Transverse colon (tissue), 4 donors: ENCODE measurements at regions of chr9 and their contacts with region 1.

Region 1: GRCh38 chr9:102700936-102701335 is 294.2 kb upstream of the CYLC2 start:
- DNase-seq: no peak
- H3K4me3 ChIP-seq: no peak overlapping the region
- H3K27ac ChIP-seq: no peak overlapping the region
- H3K4me1 ChIP-seq: no peaks in the 10 kb centered on the region
- H3K27me3 ChIP-seq: no peaks in the 10 kb centered on the region
- CTCF ChIP-seq: no peak
- EP300 ChIP-seq: no peak
- POLR2A ChIP-seq: no peak

Region 2: GRCh38 chr9:102779356-102779755 is 78.4 kb after region 1 on chr9:
- in situ Hi-C with region 1: no loop called
- intact Hi-C with region 1: no loop called
- DNase-seq: no peak
- H3K4me3 ChIP-seq: no peak overlapping the region
- H3K27ac ChIP-seq: no peak overlapping the region
- H3K4me1 ChIP-seq: no peaks in the 10 kb centered on the region
- H3K27me3 ChIP-seq: no peaks in the 10 kb centered on the region
- CTCF ChIP-seq: no peak
- EP300 ChIP-seq: no peak
- POLR2A ChIP-seq: no peak

Region 3: GRCh38 chr9:102796244-102796643 is 95.3 kb after region 1 on chr9:
- in situ Hi-C with region 1: loop called in 1 of 4 experiments (anchors 25 kb)
- intact Hi-C with region 1: no loop called
- DNase-seq: no peak
- H3K4me3 ChIP-seq: no peak overlapping the region
- H3K27ac ChIP-seq: no peak overlapping the region
- H3K4me1 ChIP-seq: no peaks in the 10 kb centered on the region
- H3K27me3 ChIP-seq: no peaks in the 10 kb centered on the region
- CTCF ChIP-seq: no peak
- EP300 ChIP-seq: no peak
- POLR2A ChIP-seq: no peak

Region 4: GRCh38 chr9:103407260-103407659 is 706.3 kb after region 1 on chr9:
- in situ Hi-C with region 1: no loop called
- intact Hi-C with region 1: no loop called
- DNase-seq: no peak
- H3K4me3 ChIP-seq: no peak overlapping the region
- H3K27ac ChIP-seq: no peak overlapping the region
- H3K4me1 ChIP-seq: no peaks in the 10 kb centered on the region
- H3K27me3 ChIP-seq: no peaks in the 10 kb centered on the region
- CTCF ChIP-seq: no peak
- EP300 ChIP-seq: no peak
- POLR2A ChIP-seq: no peak

Region 5: GRCh38 chr9:104110509-104110908 is 1409.6 kb after region 1 on chr9:
- in situ Hi-C with region 1: no loop called
- intact Hi-C with region 1: no loop called
- DNase-seq: no peak
- H3K4me3 ChIP-seq: no peak overlapping the region
- H3K27ac ChIP-seq: no peak overlapping the region
- H3K4me1 ChIP-seq: no peaks in the 10 kb centered on the region
- H3K27me3 ChIP-seq: no peaks in the 10 kb centered on the region
- CTCF ChIP-seq: no peak
- EP300 ChIP-seq: no peak
- POLR2A ChIP-seq: no peak